ENCODE measurements at regions of chr1 and their contacts with region 1.

Region 1: DNA sequence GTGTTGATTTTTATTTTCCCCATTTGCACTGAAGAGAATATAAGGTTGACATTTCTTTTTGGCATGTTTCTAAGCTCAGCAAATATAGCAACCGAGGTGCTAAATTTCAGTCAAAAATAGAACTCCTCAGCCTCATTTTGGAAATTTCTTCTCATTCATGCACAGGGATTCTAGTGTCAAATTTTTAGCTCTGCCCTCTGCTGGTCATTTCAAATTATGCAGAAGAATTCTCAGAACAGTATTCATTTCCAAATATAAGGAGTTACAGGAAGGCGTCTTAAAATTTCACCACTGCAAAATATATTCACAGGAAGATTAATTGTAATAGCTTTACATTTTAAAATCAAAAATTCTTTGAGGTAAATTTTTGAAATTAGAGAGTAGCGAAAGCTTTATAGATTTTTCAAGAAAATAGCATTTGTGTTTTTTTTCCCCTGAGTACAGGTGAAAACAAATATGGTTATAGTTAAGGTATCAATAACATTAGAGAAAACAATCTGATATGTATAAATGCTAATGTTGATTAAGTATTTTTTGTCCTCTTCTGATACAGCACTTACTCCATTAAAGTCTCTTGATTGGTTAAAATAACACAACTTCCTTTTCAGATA is 57.9 kb downstream of the FMN2 start:
- DNase-seq: peak; percentile 22 to 41
- ATAC-seq: peak; percentile 56 to 81; a peak in 4 of 6 replicates
- H3K4me3 ChIP-seq: no peak overlapping the region
- H3K27ac ChIP-seq: no peak overlapping the region
- H3K4me1 ChIP-seq: peaks cover 7% of the 10 kb centered on the region; the same call in 1 of the 3 replicates
- CTCF ChIP-seq: peak; percentile 76
- EP300 ChIP-seq: no peak
- POLR2A ChIP-seq: no peak
- RAD21 ChIP-seq: peak; percentile 42 to 55

Region 2: GRCh38 chr1:240122639-240123613 is 26.7 kb before region 1 on chr1:
- CTCF ChIA-PET with region 1: interaction called, 11 read pairs
- POLR2A ChIA-PET with region 1: no interaction called
- DNase-seq: no peak
- ATAC-seq: no peak
- H3K4me3 ChIP-seq: no peak overlapping the region
- H3K27ac ChIP-seq: no peak overlapping the region
- H3K4me1 ChIP-seq: no peaks in the 10 kb centered on the region
- CTCF ChIP-seq: no peak
- EP300 ChIP-seq: no peak
- POLR2A ChIP-seq: no peak
- RAD21 ChIP-seq: no peak

Region 3: DNA sequence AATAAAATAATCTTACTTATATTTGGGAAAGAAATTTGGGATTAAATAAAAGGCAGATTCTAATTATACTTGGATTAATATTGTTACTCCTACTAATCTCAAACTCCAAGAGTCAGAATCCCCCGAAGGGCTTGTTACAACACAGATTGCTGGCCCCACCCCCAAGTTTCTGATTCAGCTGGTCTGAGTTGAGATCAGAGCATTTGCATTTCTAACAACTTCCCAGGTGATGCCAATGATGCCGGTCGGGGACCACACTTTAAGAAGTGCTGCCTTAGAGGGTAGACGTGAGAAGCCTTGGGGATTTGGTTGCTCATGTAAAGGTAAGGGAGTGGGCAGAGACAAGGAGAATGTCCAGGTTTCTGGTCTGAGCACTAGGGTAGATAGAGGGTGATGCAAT is 10.7 kb before region 1 on chr1:
- CTCF ChIA-PET with region 1: interaction called, 12 read pairs
- POLR2A ChIA-PET with region 1: no interaction called
- DNase-seq: no peak
- ATAC-seq: no peak
- H3K4me3 ChIP-seq: no peak overlapping the region
- H3K27ac ChIP-seq: no peak overlapping the region
- H3K4me1 ChIP-seq: no peaks in the 10 kb centered on the region
- CTCF ChIP-seq: no peak
- EP300 ChIP-seq: no peak
- POLR2A ChIP-seq: no peak
- RAD21 ChIP-seq: no peak

Region 4: DNA sequence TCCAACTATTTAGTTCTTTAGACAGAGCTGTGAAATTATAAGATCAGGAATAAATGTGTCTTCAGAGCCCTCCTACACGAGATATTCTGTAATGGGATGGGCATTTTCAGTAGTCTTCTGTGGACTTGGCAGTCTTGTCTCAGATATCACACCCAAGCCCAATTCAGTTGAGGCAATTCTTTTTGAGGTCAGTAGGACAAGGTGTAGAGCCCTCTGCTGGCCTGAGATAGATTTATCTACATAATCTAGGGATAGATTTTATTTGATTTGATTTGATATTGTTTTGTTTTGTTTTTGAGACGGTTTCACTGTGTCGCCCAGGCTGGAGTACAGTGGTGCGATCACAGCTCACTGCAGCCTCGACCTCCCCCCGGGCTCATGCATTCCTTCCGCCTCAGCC is 19.6 kb after region 1 on chr1:
- CTCF ChIA-PET with region 1: interaction called, 11 read pairs
- POLR2A ChIA-PET with region 1: no interaction called
- DNase-seq: peak; percentile 28 to 41
- ATAC-seq: peak; percentile 50 to 72; a peak in 3 of 6 replicates
- H3K4me3 ChIP-seq: no peak overlapping the region
- H3K27ac ChIP-seq: no peak overlapping the region
- H3K4me1 ChIP-seq: no peaks in the 10 kb centered on the region
- CTCF ChIP-seq: peak; percentile 48
- EP300 ChIP-seq: no peak
- POLR2A ChIP-seq: no peak
- RAD21 ChIP-seq: peak in 1 of 2 experiments; percentile 40; a peak in 3 of 5 replicates

Region 5: DNA sequence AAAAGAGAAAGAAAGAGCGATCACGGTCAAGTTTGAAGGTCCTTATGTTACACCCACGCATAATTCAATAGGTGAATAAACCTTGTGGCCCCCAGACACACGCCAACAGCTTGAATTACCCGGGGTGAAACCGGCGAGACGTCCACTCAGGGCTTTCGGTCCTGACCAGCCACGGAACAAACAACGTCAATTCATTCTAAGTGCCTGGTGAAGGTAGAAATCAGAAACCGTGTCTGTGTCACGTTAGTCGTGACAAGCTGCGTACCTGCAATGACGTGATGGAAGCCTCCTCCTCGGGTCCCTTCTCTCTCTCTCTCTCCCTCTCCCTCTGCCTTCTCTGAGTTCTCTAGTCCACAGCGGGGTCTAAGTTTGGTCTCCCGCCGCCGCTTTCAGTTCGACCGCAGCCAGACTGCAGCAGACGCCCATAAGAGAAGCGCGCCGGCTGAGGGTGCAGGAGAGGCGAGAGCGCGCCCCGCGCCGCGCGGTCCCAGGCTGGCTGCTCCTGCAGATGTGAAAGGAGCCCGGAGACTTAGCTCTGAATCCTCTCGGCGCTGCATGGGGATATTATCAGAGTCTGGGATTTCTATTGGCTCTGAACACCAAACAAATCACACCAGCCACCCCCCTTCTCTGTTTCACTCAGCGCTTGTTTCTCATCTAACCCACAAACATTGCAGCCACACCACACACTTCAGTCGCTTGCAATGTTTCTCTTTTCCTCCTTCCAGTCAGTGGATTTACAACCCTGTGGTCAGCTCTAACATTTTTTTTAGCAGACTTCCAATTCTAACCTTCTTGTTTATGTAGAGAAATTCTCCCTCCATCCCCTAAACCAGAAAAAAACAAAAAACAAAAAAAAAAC is 462.3 kb after region 1 on chr1 and contains the start of gene GREM2:
- CTCF ChIA-PET with region 1: no interaction called
- POLR2A ChIA-PET with region 1: no interaction called
- DNase-seq: peak; percentile 31
- ATAC-seq: peak; percentile 89 to 92
- H3K4me3 ChIP-seq: peak within 1 kb of the TSS; percentile 59
- H3K27ac ChIP-seq: peak within 1 kb of the TSS in 1 of 2 experiments; percentile 70; a peak in 3 of 6 replicates
- H3K4me1 ChIP-seq: peaks cover 11% of the 10 kb centered on the region; the same call in 1 of the 3 replicates
- CTCF ChIP-seq: no peak
- EP300 ChIP-seq: no peak
- POLR2A ChIP-seq: no peak
- RAD21 ChIP-seq: no peak
- polyA plus RNA-seq, gene GREM2: 0.13 and 0.15 TPM in 2 replicates